H1 (cell line): ENCODE measurements at regions of chr4 and their contacts with region 1.

Region 1: DNA sequence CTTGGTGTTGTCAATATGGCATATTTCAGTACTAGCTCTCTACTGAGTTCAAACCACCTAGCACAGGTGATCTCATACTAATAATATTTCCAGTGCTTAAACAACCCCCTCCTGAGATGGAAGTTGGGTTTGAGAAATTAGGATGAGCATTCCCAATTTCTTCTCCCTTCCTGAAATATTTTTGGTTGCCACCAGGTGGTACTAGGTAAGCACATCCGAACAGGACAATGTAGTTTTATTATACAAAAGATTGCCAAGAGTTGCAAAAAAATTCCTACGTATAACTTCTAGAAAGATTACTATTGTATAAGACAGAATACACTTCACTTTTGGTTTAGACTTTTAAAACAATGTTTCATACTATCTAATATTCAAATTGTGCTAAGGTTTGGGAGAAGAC is 484.5 kb downstream of the PACRGL start:
- DNase-seq: no peak
- H3K4me3 ChIP-seq: no peak overlapping the region
- H3K27ac ChIP-seq: no peak overlapping the region
- H3K4me1 ChIP-seq: no peaks in the 10 kb centered on the region
- H3K27me3 ChIP-seq: no peaks in the 10 kb centered on the region
- CTCF ChIP-seq: peak in 2 of 3 experiments; percentile 19 to 21; a peak in 2 of 4 replicates
- EP300 ChIP-seq: no peak
- POLR2A ChIP-seq: no peak
- RAD21 ChIP-seq: peak; percentile 43 to 53

Region 2: DNA sequence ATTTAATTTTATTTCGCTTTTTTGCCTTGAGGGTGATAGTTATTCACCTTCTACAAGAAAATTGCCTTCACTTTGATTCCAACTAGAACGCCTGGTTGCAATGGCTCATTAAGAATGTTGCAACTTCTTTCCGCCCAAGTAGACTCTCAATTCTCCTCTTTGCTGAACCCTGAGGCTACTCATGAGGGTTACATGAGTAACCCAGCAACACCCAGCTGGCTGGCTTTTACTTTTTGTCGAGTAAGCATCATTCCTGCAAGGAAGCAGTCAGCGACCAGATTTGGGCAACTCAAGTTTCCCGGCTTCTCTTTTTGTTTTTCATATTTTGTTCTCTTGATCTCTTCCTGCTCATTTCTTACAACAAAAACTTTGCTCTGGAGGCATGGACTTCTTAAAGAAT is 10.9 kb after region 1 on chr4:
- CTCF ChIA-PET with region 1: interaction called, 15 read pairs
- POLR2A ChIA-PET with region 1: no interaction called
- DNase-seq: no peak
- H3K4me3 ChIP-seq: no peak overlapping the region
- H3K27ac ChIP-seq: no peak overlapping the region
- H3K4me1 ChIP-seq: no peaks in the 10 kb centered on the region
- H3K27me3 ChIP-seq: no peaks in the 10 kb centered on the region
- CTCF ChIP-seq: no peak
- EP300 ChIP-seq: no peak
- POLR2A ChIP-seq: no peak
- RAD21 ChIP-seq: no peak

Region 3: DNA sequence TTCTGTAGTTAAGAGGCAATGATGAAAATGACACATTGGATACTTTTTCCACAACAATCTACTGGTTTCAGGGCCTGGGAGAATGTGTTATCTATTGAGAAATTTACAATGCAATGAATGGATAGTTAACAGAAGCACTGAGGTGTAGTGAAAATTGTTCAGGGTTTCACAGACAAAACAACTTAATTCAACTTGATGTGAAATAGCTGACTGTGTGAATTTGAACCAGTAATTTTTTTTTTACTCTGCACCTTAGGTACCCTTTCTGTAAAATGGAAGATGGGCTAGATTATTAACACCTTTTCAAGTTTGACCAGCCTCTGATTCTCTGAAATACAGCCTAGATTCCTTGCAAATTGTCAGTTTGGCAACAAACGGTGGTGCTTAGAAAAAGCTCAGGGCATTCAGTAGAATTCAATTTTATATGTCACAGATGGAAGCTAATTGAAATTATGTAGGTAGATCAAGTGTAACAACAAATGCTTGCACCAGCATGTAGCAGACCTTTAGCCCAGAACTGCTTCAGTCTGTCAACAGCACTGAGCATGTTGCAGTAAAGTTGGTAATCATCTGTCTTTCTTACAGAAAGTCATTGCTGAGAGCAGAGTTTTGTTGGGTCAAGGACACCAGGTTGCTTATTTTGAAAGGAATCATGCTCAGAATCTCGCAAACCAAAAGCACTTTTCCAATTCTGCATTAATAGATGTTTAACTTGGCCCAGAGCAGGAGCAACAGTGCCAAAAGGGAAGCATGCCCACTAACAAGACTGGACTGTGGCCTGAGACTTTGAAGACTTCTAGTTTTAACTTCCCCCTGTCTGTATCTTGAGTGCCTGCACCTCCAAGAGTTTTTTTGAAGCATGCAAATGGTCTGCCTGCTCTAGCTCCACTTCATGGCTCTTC is 42.1 kb after region 1 on chr4:
- CTCF ChIA-PET with region 1: no interaction called
- POLR2A ChIA-PET with region 1: no interaction called
- DNase-seq: no peak
- H3K4me3 ChIP-seq: no peak overlapping the region
- H3K27ac ChIP-seq: no peak overlapping the region
- H3K4me1 ChIP-seq: no peaks in the 10 kb centered on the region
- H3K27me3 ChIP-seq: no peaks in the 10 kb centered on the region
- CTCF ChIP-seq: no peak
- EP300 ChIP-seq: no peak
- POLR2A ChIP-seq: no peak
- RAD21 ChIP-seq: no peak

Region 4: DNA sequence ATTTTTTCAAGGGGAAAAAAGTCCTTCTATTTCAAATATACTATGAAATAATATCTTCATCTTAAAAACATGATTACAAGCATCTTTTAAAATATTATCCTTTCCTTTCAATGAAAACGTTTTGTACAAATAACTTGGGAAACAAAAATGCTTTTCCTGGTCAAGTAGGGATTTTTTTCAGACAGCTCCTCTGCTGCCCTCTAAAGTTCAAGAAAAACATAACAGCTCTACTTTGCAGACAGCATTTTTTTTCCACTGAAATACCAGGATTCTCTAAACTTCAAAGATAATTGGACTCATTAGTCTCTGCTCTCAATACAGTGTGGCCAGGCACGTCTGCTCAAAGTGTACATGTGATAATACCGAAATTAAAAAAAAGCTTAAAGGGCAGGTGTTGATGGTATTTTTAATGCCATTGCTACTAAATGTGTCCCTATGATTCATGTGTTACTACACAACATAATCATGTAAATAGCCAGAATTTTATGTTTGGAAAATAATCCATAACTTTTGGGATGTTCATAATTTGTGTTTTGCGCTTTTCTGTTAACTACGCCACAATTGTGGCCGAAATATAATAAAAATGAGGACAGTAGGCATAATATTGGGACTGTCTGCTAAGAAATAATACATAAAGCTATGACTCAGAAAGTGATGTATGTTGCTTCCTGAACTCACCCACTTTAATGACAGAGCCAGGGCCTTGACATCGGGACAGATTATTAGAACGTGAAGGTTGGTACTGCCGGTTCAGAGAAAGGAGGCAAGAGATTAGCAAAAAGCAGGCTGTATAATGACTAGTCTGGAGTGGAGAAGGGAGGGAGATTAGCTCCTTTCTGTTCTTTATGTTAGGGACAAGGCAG is 284.9 kb after region 1 on chr4:
- CTCF ChIA-PET with region 1: interaction called, 20 read pairs
- POLR2A ChIA-PET with region 1: no interaction called
- DNase-seq: no peak
- H3K4me3 ChIP-seq: no peak overlapping the region
- H3K27ac ChIP-seq: no peak overlapping the region
- H3K4me1 ChIP-seq: no peaks in the 10 kb centered on the region
- H3K27me3 ChIP-seq: no peaks in the 10 kb centered on the region
- CTCF ChIP-seq: peak in 2 of 3 experiments; percentile 37 to 53; a peak in 2 of 4 replicates
- EP300 ChIP-seq: no peak
- POLR2A ChIP-seq: no peak
- RAD21 ChIP-seq: peak; percentile 71 to 76